Transverse colon (tissue), 4 donors: ENCODE measurements at regions of chr17 and their contacts with region 1.

Region 1: GRCh38 chr17:72539981-72540897 is 419.4 kb downstream of the SOX9 start:
- DNase-seq: peak; percentile 79
- H3K4me3 ChIP-seq: peak overlapping the region in 2 of 4 donors; percentile 18 to 42
- H3K27ac ChIP-seq: peak overlapping the region; percentile 55 to 81 (median 78)
- H3K4me1 ChIP-seq: peaks cover 0 to 19% (median 18%) of the 10 kb centered on the region in 4 donors
- H3K27me3 ChIP-seq: no peaks in the 10 kb centered on the region
- CTCF ChIP-seq: peak; percentile 67 to 91 (median 88)
- EP300 ChIP-seq: no peak
- POLR2A ChIP-seq: no peak

Region 2: GRCh38 chr17:70644096-70644495 is 1896.1 kb before region 1 on chr17:
- in situ Hi-C with region 1: loop called in 3 of 4 experiments (anchors 10 to 25 kb)
- intact Hi-C with region 1: loop called (anchors 5 kb)
- DNase-seq: no peak
- H3K4me3 ChIP-seq: no peak overlapping the region
- H3K27ac ChIP-seq: no peak overlapping the region
- H3K4me1 ChIP-seq: no peaks in the 10 kb centered on the region
- H3K27me3 ChIP-seq: no peaks in the 10 kb centered on the region
- CTCF ChIP-seq: no peak
- EP300 ChIP-seq: no peak
- POLR2A ChIP-seq: no peak

Region 3: DNA sequence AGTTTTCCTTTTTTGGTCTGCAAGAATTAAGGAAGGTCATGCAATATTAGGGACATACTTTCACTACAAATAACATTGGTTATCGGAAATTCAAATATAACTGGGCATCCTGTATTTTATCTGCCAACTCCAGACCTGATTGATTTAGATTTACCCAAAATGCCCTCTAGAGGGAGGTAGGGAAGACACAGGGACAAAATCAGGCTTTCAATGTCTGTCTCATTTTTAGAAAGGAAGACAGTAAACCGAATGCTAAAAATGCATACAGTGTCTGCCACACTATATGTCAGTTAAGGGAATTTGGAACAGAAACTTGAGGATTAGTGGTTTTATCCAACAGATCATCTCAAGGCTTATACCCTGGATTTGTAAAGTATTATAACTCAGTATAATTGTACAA is 581.1 kb before region 1 on chr17:
- in situ Hi-C with region 1: loop called in 1 of 4 experiments (anchors 25 kb)
- intact Hi-C with region 1: no loop called
- DNase-seq: no peak
- H3K4me3 ChIP-seq: no peak overlapping the region
- H3K27ac ChIP-seq: no peak overlapping the region
- H3K4me1 ChIP-seq: no peaks in the 10 kb centered on the region
- H3K27me3 ChIP-seq: no peaks in the 10 kb centered on the region
- CTCF ChIP-seq: peak; percentile 27 to 51 (median 45)
- EP300 ChIP-seq: no peak
- POLR2A ChIP-seq: no peak

Region 4: GRCh38 chr17:72126563-72127486 is 413.4 kb before region 1 on chr17:
- in situ Hi-C with region 1: loop called in 3 of 4 experiments (anchors 25 kb)
- intact Hi-C with region 1: loop called (anchors 5 kb)
- DNase-seq: peak; percentile 39
- H3K4me3 ChIP-seq: no peak overlapping the region
- H3K27ac ChIP-seq: peak overlapping the region; percentile 29 to 87 (median 74)
- H3K4me1 ChIP-seq: peaks cover 0 to 26% (median 15%) of the 10 kb centered on the region in 4 donors
- H3K27me3 ChIP-seq: peaks cover 24% of the 10 kb centered on the region
- CTCF ChIP-seq: no peak
- EP300 ChIP-seq: no peak
- POLR2A ChIP-seq: peak; percentile 22

Region 5: GRCh38 chr17:72430611-72431432 is 109.4 kb before region 1 on chr17:
- in situ Hi-C with region 1: loop called in 1 of 4 experiments (anchors 10 kb)
- intact Hi-C with region 1: no loop called
- DNase-seq: peak; percentile 77
- H3K4me3 ChIP-seq: no peak overlapping the region
- H3K27ac ChIP-seq: peak overlapping the region; percentile 72 to 81 (median 75)
- H3K4me1 ChIP-seq: peaks cover 6 to 64% (median 39%) of the 10 kb centered on the region in 4 donors
- H3K27me3 ChIP-seq: no peaks in the 10 kb centered on the region
- CTCF ChIP-seq: peak; percentile 26 to 72 (median 39)
- EP300 ChIP-seq: no peak
- POLR2A ChIP-seq: peak; percentile 25

Region 6: DNA sequence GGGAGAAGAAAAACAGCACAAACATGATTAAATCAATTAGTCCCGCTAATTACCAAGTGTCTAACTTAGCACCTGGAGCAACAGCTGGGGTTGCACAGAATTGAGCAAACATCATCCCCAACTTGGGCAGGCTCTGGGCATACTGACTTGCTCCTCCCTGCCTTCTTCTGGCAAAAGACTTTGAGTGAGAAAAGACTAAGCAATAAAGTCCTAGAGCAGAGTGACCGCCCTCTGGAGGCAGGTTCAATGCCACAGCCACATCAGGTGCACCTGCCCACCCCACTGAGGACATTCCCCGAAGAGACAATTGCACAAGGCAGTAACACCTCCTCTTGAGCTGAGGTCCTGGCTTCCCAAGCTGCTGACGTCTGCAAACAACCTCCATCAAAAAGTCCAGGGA is 61.1 kb before region 1 on chr17:
- in situ Hi-C with region 1: no loop called
- intact Hi-C with region 1: no loop called
- DNase-seq: no peak
- H3K4me3 ChIP-seq: no peak overlapping the region
- H3K27ac ChIP-seq: peak overlapping the region in 2 of 4 donors; percentile 72 to 78
- H3K4me1 ChIP-seq: peaks cover 0 to 43% (median 30%) of the 10 kb centered on the region in 4 donors
- H3K27me3 ChIP-seq: no peaks in the 10 kb centered on the region
- CTCF ChIP-seq: peak in 4 of 5 experiments; percentile 26 to 46 (median 26)
- EP300 ChIP-seq: no peak
- POLR2A ChIP-seq: no peak

Region 7: DNA sequence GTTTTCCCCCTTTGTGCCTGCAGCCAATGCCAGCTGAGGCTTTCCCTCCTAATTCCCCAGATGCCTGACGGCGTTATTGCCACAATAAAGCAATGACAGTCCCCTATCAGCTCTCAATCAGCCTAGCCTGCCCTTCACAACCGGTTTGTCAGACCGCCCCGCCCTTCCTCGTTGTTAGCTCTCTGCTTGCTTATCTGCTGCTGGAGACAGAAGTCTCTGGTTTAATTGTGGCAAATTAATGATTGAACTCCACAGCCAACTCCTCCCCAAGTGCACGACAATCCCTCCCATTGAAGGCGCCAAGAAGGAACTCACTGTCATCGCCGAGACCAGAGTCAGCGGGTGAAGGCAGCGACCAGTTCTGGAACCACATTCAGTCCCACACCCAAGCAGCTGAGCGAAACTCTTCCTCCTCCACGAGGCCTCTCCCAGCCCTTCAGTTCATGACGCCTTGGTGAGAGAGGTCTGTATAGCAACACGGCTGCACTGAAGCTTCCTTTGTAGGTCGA is 77.8 kb after region 1 on chr17:
- in situ Hi-C with region 1: no loop called
- intact Hi-C with region 1: no loop called
- DNase-seq: peak; percentile 94
- H3K4me3 ChIP-seq: peak overlapping the region in 1 of 4 donors; percentile 5
- H3K27ac ChIP-seq: peak overlapping the region; percentile 77 to 84 (median 84)
- H3K4me1 ChIP-seq: peaks cover 8 to 57% (median 38%) of the 10 kb centered on the region in 4 donors
- H3K27me3 ChIP-seq: no peaks in the 10 kb centered on the region
- CTCF ChIP-seq: no peak
- EP300 ChIP-seq: no peak
- POLR2A ChIP-seq: peak; percentile 87